CD4-positive, alpha-beta T cell (primary cell): ENCODE measurements at regions of chr11 and their contacts with region 1.

Region 1: DNA sequence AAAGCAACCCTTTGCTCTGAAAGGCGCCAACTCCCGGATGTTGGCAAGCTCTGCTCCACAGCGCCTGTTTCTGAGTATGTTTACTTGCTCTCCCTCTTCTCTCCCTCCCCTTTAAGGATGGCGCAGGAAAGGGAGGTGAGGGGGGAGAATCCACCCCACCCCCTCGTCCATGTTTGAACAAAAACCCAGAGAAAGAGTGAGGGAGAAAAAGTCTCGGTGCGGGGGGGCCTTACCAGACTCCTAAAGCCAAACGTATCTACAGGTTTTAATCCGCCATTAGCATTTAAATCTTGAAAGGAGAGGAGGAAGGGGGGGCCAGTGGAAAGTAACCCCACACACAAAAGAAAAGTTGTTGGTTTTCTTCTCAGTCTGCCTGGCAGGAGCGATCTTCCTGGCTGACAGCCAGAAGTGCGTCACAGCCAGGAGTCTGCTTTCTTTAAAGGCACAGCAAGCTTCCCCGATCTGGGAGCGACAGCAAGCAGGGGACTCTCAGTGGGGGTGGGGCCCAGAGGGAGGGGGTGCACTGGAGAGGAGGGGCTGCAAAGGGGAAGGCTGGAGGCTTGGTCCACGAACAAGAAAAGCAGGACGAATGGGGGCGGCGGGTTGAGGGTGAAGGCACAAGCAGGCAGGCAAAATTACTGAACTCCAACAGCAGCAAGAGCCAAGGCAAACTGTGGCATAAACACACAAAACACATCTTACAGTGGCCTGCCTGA is 39.5 kb downstream of the NUMA1 start:
- DNase-seq: peak; percentile 60 to 91 (median 82)
- ATAC-seq: peak; percentile 78
- H3K4me3 ChIP-seq: peak overlapping the region; percentile 75
- H3K4me3 Mint-ChIP-seq: no peak overlapping the region
- H3K27ac ChIP-seq: peak overlapping the region; percentile 91 to 95
- H3K27ac Mint-ChIP-seq: no peak overlapping the region
- H3K4me1 ChIP-seq: peaks cover 64% of the 10 kb centered on the region
- H3K4me1 Mint-ChIP-seq: peaks cover 46% of the 10 kb centered on the region
- H3K27me3 ChIP-seq: no peaks in the 10 kb centered on the region
- H3K27me3 Mint-ChIP-seq: no peaks in the 10 kb centered on the region
- CTCF ChIP-seq: no peak

Region 2: GRCh38 chr11:72024069-72024754 is 16.7 kb before region 1 on chr11:
- CTCF ChIA-PET with region 1: interaction called, 56 read pairs
- POLR2A ChIA-PET with region 1: interaction called, 32 read pairs
- intact Hi-C with region 1: no loop called
- DNase-seq: no peak
- ATAC-seq: no peak
- H3K4me3 ChIP-seq: no peak overlapping the region
- H3K4me3 Mint-ChIP-seq: no peak overlapping the region
- H3K27ac ChIP-seq: no peak overlapping the region
- H3K27ac Mint-ChIP-seq: peak overlapping the region; percentile 81
- H3K4me1 ChIP-seq: peaks cover 20% of the 10 kb centered on the region
- H3K4me1 Mint-ChIP-seq: peaks cover 43% of the 10 kb centered on the region
- H3K27me3 ChIP-seq: no peaks in the 10 kb centered on the region
- H3K27me3 Mint-ChIP-seq: no peaks in the 10 kb centered on the region
- CTCF ChIP-seq: no peak

Region 3: DNA sequence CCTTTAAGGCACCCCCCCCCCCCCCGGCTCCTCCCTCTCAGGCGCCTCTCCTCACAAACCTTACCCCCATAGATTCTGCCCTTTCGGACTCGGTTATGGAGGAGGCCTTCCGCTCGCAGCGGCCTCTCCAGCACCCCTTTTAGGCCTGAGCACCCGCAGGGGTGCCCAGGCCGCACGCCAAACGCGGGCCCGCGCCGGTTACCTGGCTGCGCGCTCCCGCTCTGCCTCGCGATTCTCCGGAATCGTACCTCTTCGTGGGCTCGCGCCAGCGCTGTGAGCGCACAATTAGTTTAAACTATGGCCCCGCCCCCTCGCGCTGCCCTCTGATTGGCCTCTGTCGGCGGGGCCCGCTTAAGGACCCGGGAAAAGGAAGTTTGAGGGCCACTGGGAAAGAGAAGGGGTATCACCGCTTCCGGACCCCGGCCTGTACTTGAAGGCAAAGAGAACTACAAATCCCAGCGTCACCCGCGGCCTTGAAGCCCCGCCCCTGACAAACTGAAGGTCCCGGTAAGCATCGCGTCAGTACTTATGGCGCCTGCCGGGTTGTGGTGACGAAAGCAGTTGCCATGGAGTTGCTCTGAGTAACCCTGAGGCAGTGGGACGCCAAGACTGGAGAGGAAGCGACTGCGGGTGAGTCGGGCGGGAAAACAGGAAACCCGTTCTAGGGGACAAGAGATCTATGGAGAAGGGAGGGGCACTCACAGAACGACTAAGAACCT is 39.5 kb after region 1 on chr11 and contains the starts of genes LRRC51 and NUMA1:
- CTCF ChIA-PET with region 1: interaction called, 5 read pairs
- POLR2A ChIA-PET with region 1: interaction called, 44 read pairs
- intact Hi-C with region 1: loop called (anchors 1 kb)
- DNase-seq: peak; percentile 97 to 100 (median 99)
- ATAC-seq: peak; percentile 84
- H3K4me3 ChIP-seq: peak within 1 kb of the TSS; percentile 73
- H3K4me3 Mint-ChIP-seq: peak within 1 kb of the TSS; percentile 95
- H3K27ac ChIP-seq: peak within 1 kb of the TSS; percentile 82 to 93
- H3K27ac Mint-ChIP-seq: peak within 1 kb of the TSS; percentile 92
- H3K4me1 ChIP-seq: peaks cover 31% of the 10 kb centered on the region
- H3K4me1 Mint-ChIP-seq: peaks cover 41% of the 10 kb centered on the region
- H3K27me3 ChIP-seq: no peaks in the 10 kb centered on the region
- H3K27me3 Mint-ChIP-seq: no peaks in the 10 kb centered on the region
- CTCF ChIP-seq: no peak
- total RNA-seq, gene LRRC51: 0.87 to 1.1 TPM
- total RNA-seq, gene NUMA1: 191 to 197 TPM

Region 4: DNA sequence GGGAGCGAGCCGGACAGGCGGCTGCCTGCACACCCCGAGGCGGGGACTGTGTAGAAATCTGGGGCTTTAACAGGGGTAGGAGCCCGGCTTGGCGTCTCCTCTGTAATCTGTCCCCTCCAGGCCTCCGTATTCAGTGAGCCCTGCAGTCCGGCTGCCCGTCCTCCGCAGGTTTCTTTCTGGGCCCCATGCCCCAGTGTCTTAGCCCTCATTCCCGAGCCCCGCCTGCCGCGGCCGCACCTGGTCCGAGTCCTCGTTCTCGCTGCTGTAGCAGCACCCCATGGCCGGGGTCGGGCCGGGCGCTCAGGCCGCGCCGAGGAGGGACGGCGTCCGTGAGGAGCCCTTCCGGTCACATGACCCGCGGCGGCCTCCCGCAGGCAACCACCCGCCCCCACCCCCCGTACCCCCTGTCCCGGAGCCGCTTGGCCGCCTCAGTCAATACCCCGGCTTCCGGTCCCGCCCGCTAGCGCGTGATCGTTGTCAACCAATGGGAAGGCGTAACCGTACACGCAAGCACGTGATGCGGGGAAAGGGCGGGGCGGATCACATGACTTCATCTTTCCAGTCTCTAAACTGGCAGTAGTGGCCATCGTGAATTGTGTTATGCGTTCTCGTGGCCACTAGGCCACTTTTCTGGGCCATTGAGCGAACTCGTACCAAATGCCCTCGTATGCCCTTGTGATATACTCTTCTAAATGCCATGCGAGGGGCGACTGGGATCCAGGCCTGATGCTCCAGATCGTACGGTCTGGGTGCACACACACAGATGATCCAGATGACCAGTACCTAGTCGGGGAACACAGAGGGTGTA is 62.3 kb after region 1 on chr11 and contains the start of gene LAMTOR1:
- CTCF ChIA-PET with region 1: no interaction called
- POLR2A ChIA-PET with region 1: interaction called, 11 read pairs
- intact Hi-C with region 1: no loop called
- DNase-seq: peak; percentile 94 to 98 (median 97)
- ATAC-seq: peak; percentile 95
- H3K4me3 ChIP-seq: peak within 1 kb of the TSS; percentile 93
- H3K4me3 Mint-ChIP-seq: peak within 1 kb of the TSS; percentile 91
- H3K27ac ChIP-seq: peak within 1 kb of the TSS; percentile 88 to 93
- H3K27ac Mint-ChIP-seq: peak within 1 kb of the TSS; percentile 98
- H3K4me1 ChIP-seq: peaks cover 34% of the 10 kb centered on the region
- H3K4me1 Mint-ChIP-seq: peaks cover 49% of the 10 kb centered on the region
- H3K27me3 ChIP-seq: no peaks in the 10 kb centered on the region
- H3K27me3 Mint-ChIP-seq: no peaks in the 10 kb centered on the region
- CTCF ChIP-seq: peak; percentile 36
- total RNA-seq, gene LAMTOR1: 29.5 to 30.4 TPM

Region 5: DNA sequence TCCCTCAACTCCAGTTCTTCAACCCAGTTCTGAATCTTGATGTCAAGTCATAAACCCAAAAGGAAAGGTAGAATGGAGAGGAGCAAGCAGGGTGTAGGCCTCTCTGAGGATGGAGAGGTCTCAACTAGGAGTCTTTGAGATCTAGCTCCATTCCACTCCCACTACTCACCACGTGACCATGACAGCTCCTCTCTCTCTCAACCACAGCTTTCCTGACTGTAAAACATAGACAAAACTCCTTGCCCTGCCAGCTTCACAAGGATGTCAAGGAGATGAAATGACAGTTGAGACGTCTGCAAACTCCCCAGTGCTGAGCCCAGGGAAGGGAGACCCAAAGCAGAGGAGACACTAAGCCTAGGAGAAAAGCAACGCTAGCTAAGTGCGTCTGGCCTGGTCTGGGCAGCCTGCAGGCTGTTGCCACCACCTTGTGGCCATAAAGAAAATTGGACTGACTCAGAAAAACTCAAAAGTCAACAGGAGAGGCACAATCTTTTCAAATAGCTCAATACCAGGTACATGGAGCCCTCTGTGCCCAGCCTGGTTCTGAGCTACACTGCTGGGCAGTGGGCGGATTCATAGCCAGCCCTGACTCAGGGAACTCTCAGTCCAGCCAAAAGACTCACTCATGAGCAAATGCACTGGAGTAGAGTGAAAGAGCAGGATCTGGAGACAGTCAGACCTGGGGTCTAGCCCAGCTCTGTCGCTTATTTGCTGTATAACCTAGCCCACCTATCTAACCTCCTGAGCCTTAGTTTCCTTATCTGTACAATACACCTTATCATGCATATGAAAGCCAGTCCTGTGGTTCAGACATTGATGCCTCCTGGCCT is 390.1 kb after region 1 on chr11:
- CTCF ChIA-PET with region 1: no interaction called
- POLR2A ChIA-PET with region 1: interaction called, 11 read pairs
- intact Hi-C with region 1: no loop called
- DNase-seq: peak in 12 of 14 experiments; percentile 9 to 74 (median 18)
- ATAC-seq: peak; percentile 16
- H3K4me3 ChIP-seq: no peak overlapping the region
- H3K4me3 Mint-ChIP-seq: peak overlapping the region; percentile 7
- H3K27ac ChIP-seq: no peak overlapping the region
- H3K27ac Mint-ChIP-seq: peak overlapping the region; percentile 58
- H3K4me1 ChIP-seq: peaks cover 24% of the 10 kb centered on the region
- H3K4me1 Mint-ChIP-seq: peaks cover 44% of the 10 kb centered on the region
- H3K27me3 ChIP-seq: no peaks in the 10 kb centered on the region
- H3K27me3 Mint-ChIP-seq: no peaks in the 10 kb centered on the region
- CTCF ChIP-seq: peak; percentile 67

Region 6: GRCh38 chr11:73625696-73626318 is 1584.9 kb after region 1 on chr11:
- CTCF ChIA-PET with region 1: no interaction called
- POLR2A ChIA-PET with region 1: no interaction called
- intact Hi-C with region 1: no loop called
- DNase-seq: peak; percentile 55 to 84 (median 64)
- ATAC-seq: peak; percentile 91
- H3K4me3 ChIP-seq: no peak overlapping the region
- H3K4me3 Mint-ChIP-seq: no peak overlapping the region
- H3K27ac ChIP-seq: no peak overlapping the region
- H3K27ac Mint-ChIP-seq: no peak overlapping the region
- H3K4me1 ChIP-seq: peaks cover 5% of the 10 kb centered on the region
- H3K4me1 Mint-ChIP-seq: no peaks in the 10 kb centered on the region
- H3K27me3 ChIP-seq: peaks cover 3 to 14% of the 10 kb centered on the region in 2 experiments
- H3K27me3 Mint-ChIP-seq: peaks cover 23% of the 10 kb centered on the region
- CTCF ChIP-seq: peak; percentile 89